H1 (cell line): ENCODE measurements at regions of chr3 and their contacts with region 1.

Region 1: DNA sequence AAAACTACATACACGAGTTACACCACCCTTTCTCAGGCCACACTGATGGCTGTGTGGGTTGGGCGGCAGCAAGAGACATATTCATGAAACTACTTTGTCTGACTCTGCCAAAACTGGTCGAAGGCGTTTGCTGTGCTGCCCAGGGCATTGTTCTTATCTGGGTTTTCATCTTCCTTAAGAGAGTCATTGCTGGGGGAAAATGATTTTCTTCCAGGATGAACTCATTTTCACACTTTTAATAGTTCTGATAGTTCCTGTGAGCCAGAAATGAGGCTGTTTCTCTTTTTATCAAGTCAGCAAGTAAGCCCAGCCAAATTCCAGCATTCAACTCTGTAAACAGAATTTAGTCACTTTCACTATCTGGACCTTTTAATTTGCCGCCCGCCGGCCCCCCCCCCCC is 47.6 kb downstream of the TRIM71 start:
- DNase-seq: no peak
- H3K4me3 ChIP-seq: no peak overlapping the region
- H3K27ac ChIP-seq: no peak overlapping the region
- H3K4me1 ChIP-seq: peaks cover 41 to 65% (median 63%) of the 10 kb centered on the region in 4 experiments
- H3K27me3 ChIP-seq: no peaks in the 10 kb centered on the region
- CTCF ChIP-seq: no peak
- EP300 ChIP-seq: no peak
- POLR2A ChIP-seq: no peak
- RAD21 ChIP-seq: no peak

Region 2: DNA sequence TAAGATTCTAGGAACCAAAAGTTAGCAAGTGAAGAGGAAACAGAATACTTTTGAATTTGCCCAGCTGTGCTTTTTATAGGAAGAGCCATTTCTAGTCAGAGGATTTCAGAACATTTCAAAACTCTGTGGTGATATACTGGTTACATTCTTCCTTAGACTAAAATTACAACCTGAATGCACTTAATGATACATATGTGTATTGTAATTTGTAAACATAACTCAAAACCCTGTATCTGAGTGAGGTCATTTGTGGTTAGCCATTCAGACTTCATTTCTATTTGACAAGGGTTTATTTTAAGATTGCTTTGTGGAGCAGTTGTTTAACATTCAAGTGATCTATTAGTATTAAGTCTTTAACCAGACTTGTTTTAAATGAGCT is 107.0 kb before region 1 on chr3:
- CTCF ChIA-PET with region 1: no interaction called
- POLR2A ChIA-PET with region 1: no interaction called
- DNase-seq: no peak
- H3K4me3 ChIP-seq: no peak overlapping the region
- H3K27ac ChIP-seq: no peak overlapping the region
- H3K4me1 ChIP-seq: 0 out of 7 replicates have a peak, but pooled peaks cover 0 to 4% (median 0%) of the 10 kb centered on the region in 4 experiments
- H3K27me3 ChIP-seq: no peaks in the 10 kb centered on the region
- CTCF ChIP-seq: no peak
- EP300 ChIP-seq: no peak
- POLR2A ChIP-seq: no peak
- RAD21 ChIP-seq: no peak

Region 3: DNA sequence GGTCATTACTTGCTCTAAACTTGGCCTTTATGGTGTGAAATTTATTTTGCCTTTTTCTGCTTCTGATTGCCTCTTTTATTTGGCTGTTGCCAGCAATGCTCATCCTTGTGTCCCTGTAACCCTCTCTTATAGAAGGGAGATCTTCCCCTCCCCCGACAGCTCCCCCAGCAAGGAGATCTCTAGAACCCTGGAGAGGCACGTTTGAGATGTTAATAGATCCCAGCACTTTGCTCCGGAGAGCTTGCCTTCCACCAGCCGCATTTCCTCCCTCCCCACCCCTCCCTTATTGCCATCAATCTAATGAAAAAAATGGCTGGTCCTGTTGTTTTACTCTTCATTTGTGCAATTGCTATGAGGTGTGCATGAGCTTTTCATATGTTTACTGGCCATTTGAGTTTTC is 29.4 kb before region 1 on chr3:
- CTCF ChIA-PET with region 1: interaction called, 16 read pairs
- POLR2A ChIA-PET with region 1: interaction called, 104 read pairs
- DNase-seq: peak in 1 of 2 experiments; percentile 73
- H3K4me3 ChIP-seq: peak overlapping the region; percentile 17 to 57 (median 37); a peak in 6 of 8 replicates
- H3K27ac ChIP-seq: no peak overlapping the region
- H3K4me1 ChIP-seq: peaks cover 26 to 55% (median 37%) of the 10 kb centered on the region in 4 experiments
- H3K27me3 ChIP-seq: no peaks in the 10 kb centered on the region
- CTCF ChIP-seq: no peak
- EP300 ChIP-seq: peak in 1 of 2 experiments; percentile 62; a peak in 1 of 3 replicates
- POLR2A ChIP-seq: peak in 1 of 2 experiments; percentile 67; a peak in 2 of 3 replicates
- RAD21 ChIP-seq: peak in 1 of 2 experiments; percentile 10; a peak in 1 of 4 replicates

Region 4: GRCh38 chr3:32842531-32842931 is 22.9 kb before region 1 on chr3:
- CTCF ChIA-PET with region 1: interaction called, 34 read pairs
- POLR2A ChIA-PET with region 1: interaction called, 104 read pairs
- DNase-seq: no peak
- H3K4me3 ChIP-seq: peak overlapping the region in 3 of 4 experiments; percentile 12 to 57 (median 35); a peak in 5 of 8 replicates
- H3K27ac ChIP-seq: peak overlapping the region; percentile 51; the same call in 1 of the 2 replicates
- H3K4me1 ChIP-seq: peaks cover 43 to 68% (median 61%) of the 10 kb centered on the region in 4 experiments
- H3K27me3 ChIP-seq: no peaks in the 10 kb centered on the region
- CTCF ChIP-seq: no peak
- EP300 ChIP-seq: no peak
- POLR2A ChIP-seq: peak in 1 of 2 experiments; percentile 60; a peak in 2 of 3 replicates
- RAD21 ChIP-seq: no peak

Region 5: GRCh38 chr3:32848215-32848614 is 17.2 kb before region 1 on chr3:
- CTCF ChIA-PET with region 1: interaction called, 34 read pairs
- POLR2A ChIA-PET with region 1: interaction called, 104 read pairs
- DNase-seq: no peak
- H3K4me3 ChIP-seq: peak overlapping the region in 1 of 4 experiments; percentile 37; a peak in 1 of 8 replicates
- H3K27ac ChIP-seq: no peak overlapping the region
- H3K4me1 ChIP-seq: peaks cover 40 to 63% (median 51%) of the 10 kb centered on the region in 4 experiments
- H3K27me3 ChIP-seq: no peaks in the 10 kb centered on the region
- CTCF ChIP-seq: no peak
- EP300 ChIP-seq: no peak
- POLR2A ChIP-seq: no peak; a peak in 2 of 3 replicates
- RAD21 ChIP-seq: no peak

Region 6: DNA sequence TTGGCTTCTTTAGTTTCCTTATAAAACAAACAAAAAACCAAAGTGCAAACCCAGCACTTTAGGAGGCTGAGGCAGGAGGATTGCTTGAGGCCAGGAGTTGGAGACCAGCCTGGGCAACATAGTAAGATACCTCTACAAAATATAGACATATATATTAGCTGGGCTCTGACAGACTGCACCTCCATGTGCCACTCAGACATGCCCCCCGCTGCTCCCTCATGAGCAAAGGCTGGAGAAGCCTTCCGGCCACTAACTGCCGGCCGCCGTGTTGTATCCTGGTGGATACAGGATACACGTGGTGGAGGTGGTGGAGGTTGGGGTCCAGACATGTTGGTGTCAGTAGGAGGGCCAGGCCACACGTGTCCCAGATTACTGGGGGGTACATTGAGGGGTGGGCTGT is 56.7 kb after region 1 on chr3:
- CTCF ChIA-PET with region 1: no interaction called
- POLR2A ChIA-PET with region 1: no interaction called
- DNase-seq: no peak
- H3K4me3 ChIP-seq: no peak overlapping the region
- H3K27ac ChIP-seq: no peak overlapping the region
- H3K4me1 ChIP-seq: no peaks in the 10 kb centered on the region
- H3K27me3 ChIP-seq: no peaks in the 10 kb centered on the region
- CTCF ChIP-seq: no peak
- EP300 ChIP-seq: no peak
- POLR2A ChIP-seq: no peak
- RAD21 ChIP-seq: no peak